ENCODE measurements at regions of chr5 and their contacts with region 1.

Region 1: DNA sequence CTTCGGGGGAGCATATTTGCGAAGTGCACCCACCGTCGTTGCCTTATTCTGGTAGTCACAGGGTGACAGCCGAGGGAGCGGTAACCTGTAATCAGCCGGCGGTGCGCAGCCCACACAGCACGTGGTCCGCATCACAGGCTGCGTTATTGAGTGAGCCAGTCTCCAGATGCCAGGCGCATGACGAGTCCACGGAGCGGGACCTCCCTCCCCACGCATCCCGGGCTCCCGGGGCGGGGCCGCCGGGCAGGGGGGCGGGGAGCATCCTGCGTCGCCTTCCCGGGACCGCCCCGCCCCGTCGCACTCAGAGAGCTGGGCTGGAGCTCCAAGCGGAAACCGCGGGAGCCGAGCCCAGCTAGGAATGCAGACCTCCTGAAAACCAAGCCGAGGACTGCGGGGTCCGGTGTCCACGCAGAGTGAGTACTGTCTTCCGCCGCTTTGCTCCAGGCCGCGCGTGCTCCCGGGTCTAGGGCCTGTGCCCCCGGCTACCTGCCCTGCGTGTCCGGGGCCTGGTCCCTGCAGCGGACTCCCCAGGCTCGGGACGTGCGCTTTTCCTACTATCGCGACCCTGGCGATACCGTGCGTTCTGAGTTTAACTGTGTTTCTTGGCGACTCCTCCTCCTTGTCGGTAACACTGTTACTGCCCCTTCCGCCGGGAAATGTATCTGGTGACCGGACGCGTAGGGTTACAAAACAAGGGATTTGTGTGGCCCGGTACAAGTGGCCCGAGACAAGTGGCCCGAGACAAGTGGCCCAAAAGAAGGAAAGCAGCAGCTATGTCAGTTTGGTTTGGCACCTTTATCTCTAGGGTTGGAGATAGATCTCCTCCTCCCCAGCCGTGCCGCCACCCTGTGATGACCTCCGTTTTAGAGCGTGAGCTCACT is 40.6 kb downstream of the CAST start:
- DNase-seq: peak; percentile 90 to 99
- H3K4me3 ChIP-seq: peak overlapping the region; percentile 63 to 75
- H3K27ac ChIP-seq: peak overlapping the region; percentile 90 to 94
- H3K4me1 ChIP-seq: peaks cover 0 to 21% of the 10 kb centered on the region in 2 donors
- H3K27me3 ChIP-seq: no peaks in the 10 kb centered on the region
- CTCF ChIP-seq: no peak

Region 2: DNA sequence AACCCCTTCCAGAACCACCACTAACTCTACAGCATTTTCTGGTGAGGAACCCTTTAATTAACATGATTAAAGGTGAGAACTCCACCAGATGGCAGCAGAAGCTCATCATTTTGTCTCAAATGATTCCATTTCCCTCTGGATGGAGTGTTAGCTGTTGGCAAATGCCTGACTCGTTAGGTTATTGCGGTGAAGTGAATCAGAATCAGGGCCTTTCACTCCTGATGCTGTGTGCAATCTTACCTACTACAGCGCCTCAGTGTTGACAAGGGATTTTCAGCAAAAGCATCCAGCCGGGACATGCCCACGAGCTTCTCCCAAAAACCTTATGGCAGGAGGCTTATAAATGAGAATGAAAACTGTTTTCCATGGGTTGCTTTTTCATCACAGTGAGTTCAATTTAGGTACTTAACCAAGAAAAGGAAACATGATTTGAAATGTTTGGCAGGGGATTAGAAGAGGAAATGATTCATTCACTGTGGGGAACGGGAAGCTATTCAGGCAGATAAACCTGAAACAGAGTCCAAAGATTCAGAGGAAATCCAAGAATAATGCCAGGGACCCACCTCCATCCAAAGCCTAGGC is 88.5 kb before region 1 on chr5:
- intact Hi-C with region 1: loop called (anchors 10 kb)
- DNase-seq: peak in 1 of 2 donors; percentile 77
- H3K4me3 ChIP-seq: peak overlapping the region in 1 of 2 donors; percentile 28
- H3K27ac ChIP-seq: peak overlapping the region; percentile 76 to 80
- H3K4me1 ChIP-seq: peaks cover 8 to 15% of the 10 kb centered on the region in 2 donors
- H3K27me3 ChIP-seq: no peaks in the 10 kb centered on the region
- CTCF ChIP-seq: peak; percentile 40 to 59 (median 52)

Region 3: DNA sequence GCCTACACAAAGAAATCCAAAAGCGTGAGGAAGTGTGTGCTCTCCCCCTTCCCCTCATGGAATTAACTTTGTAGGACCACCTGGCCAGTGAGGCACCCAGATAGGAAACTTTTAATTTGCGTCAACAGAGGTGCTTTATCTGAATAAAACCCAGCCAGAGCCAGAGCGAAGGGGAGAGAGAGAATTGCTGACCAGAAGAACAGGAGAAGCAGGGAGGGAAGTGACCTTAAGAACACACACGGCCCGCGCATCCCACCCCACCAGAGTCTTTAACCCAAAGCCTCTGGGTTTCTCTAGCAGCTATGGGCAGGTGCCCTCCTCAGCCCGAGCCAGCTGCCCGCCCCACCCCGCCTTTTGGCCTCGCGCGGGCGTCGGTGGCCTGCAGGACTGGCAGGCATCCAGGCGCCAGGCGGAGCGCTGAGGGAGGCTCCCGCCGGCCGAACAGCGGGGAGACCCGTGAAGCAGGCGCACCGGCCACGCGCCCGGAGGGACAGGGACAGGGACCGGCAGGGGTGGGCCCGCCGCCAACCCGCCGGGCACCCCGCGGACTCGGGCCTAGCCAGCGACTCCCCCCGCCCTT is 104.4 kb after region 1 on chr5:
- intact Hi-C with region 1: loop called (anchors 2 kb)
- DNase-seq: peak in 1 of 2 donors; percentile 84
- H3K4me3 ChIP-seq: peak overlapping the region; percentile 95 to 99
- H3K27ac ChIP-seq: peak overlapping the region; percentile 100
- H3K4me1 ChIP-seq: peaks cover 0 to 4% of the 10 kb centered on the region in 2 donors
- H3K27me3 ChIP-seq: no peaks in the 10 kb centered on the region
- CTCF ChIP-seq: no peak